CD4-positive, alpha-beta T cell (primary cell): ENCODE measurements at regions of chr12 and their contacts with region 1.

Region 1: DNA sequence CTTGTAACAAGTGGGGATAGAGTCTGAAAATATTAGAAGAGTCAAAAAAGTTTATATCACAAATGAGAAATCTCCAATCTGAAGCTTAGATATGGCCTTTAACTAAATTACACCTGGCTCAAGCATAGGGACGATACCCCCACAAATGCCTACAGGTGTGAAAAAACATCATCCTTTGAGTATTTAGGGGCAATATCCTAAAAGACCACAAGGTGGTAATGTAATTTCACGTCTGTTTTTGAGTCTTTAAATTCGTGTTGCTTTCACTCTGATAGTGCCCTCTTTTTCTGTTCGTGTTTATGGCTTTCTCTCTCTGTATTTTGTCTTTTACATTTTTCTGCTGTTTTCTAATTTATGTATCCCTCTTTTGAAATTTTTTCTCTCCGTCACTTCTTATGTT is 84.3 kb downstream of the ETNK1 start:
- DNase-seq: no peak
- ATAC-seq: no peak
- H3K4me3 ChIP-seq: no peak overlapping the region
- H3K4me3 Mint-ChIP-seq: no peak overlapping the region
- H3K27ac ChIP-seq: no peak overlapping the region
- H3K27ac Mint-ChIP-seq: no peak overlapping the region
- H3K4me1 ChIP-seq: no peaks in the 10 kb centered on the region
- H3K4me1 Mint-ChIP-seq: no peaks in the 10 kb centered on the region
- H3K27me3 ChIP-seq: no peaks in the 10 kb centered on the region
- H3K27me3 Mint-ChIP-seq: no peaks in the 10 kb centered on the region
- CTCF ChIP-seq: peak; percentile 29

Region 2: DNA sequence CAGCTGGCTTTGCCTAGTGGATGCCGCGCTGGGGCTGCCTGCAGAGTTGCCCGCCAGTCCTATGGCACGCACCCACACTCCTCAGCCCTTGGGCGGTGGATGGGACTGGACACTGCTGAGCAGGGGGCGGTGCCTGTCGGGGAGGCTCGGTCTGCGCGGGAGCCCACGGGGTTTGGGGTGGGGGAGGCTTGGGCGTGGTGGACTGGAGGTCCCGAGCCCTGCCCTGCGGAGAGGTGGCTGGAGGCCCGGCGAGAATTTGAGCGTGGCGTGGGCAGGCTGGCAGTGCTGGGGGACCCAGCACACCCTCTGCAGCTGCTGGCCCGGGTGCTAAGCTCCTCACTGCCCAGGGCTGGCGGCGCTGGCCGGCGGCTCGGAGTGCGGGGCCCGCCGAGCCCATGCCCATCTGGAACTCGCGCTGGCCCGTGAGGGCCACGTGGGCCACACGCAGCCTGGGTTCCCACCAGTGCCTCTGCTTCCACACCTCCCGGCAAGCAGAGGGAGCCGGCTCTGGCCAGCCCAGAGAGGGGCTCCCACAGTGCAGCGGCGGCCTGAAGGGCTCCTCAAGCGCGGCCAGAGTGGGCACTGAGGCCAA is 16.2 kb before region 1 on chr12:
- CTCF ChIA-PET with region 1: no interaction called
- POLR2A ChIA-PET with region 1: no interaction called
- intact Hi-C with region 1: no loop called
- DNase-seq: peak in 1 of 14 experiments; percentile 12
- ATAC-seq: no peak
- H3K4me3 ChIP-seq: no peak overlapping the region
- H3K4me3 Mint-ChIP-seq: no peak overlapping the region
- H3K27ac ChIP-seq: no peak overlapping the region
- H3K27ac Mint-ChIP-seq: no peak overlapping the region
- H3K4me1 ChIP-seq: no peaks in the 10 kb centered on the region
- H3K4me1 Mint-ChIP-seq: no peaks in the 10 kb centered on the region
- H3K27me3 ChIP-seq: no peaks in the 10 kb centered on the region
- H3K27me3 Mint-ChIP-seq: no peaks in the 10 kb centered on the region
- CTCF ChIP-seq: no peak

Region 3: DNA sequence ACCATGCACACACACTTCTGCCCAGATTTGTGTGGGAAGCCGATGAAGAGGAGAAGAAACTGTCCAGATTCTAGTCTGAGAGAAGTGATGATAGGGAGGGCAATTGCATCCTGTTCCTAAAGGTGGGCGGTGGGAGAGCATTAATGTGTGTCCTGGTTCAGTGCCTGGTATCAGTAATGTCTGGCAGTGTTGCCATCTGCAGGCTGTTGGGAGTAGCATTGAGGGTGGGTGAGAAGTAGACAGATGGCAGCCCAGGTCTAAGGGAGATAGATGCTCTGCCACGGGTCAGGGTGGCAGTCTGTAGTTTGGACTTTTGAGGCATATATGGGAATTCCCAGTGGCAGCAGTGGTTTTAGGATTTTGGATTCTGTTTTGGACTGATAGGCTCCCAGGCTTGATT is 72.0 kb after region 1 on chr12:
- CTCF ChIA-PET with region 1: no interaction called
- POLR2A ChIA-PET with region 1: no interaction called
- intact Hi-C with region 1: loop called in 1 of 2 experiments (anchors 2 kb)
- DNase-seq: no peak
- ATAC-seq: no peak
- H3K4me3 ChIP-seq: no peak overlapping the region
- H3K4me3 Mint-ChIP-seq: no peak overlapping the region
- H3K27ac ChIP-seq: no peak overlapping the region
- H3K27ac Mint-ChIP-seq: no peak overlapping the region
- H3K4me1 ChIP-seq: no peaks in the 10 kb centered on the region
- H3K4me1 Mint-ChIP-seq: no peaks in the 10 kb centered on the region
- H3K27me3 ChIP-seq: no peaks in the 10 kb centered on the region
- H3K27me3 Mint-ChIP-seq: peaks cover 17% of the 10 kb centered on the region
- CTCF ChIP-seq: no peak